HEK293 (cell line): ENCODE measurements at regions of chr5 and their contacts with region 1.

Region 1: GRCh38 chr5:136080483-136081216 is 51.9 kb downstream of the TGFBI start:
- H3K4me3 ChIP-seq: peak overlapping the region; percentile 44
- H3K27ac ChIP-seq: peak overlapping the region; percentile 43; the same call in 1 of the 2 replicates
- H3K4me1 ChIP-seq: peaks cover 3% of the 10 kb centered on the region; the same call in 1 of the 2 replicates
- CTCF ChIP-seq: no peak

Region 2: GRCh38 chr5:135887351-135887864 is 193.2 kb before region 1 on chr5:
- CTCF ChIA-PET with region 1: interaction called, 66 read pairs
- POLR2A ChIA-PET with region 1: no interaction called
- H3K4me3 ChIP-seq: no peak overlapping the region
- H3K27ac ChIP-seq: no peak overlapping the region
- H3K4me1 ChIP-seq: peaks cover 12% of the 10 kb centered on the region
- CTCF ChIP-seq: peak; percentile 88

Region 3: GRCh38 chr5:136035837-136036236 is 44.8 kb before region 1 on chr5:
- CTCF ChIA-PET with region 1: no interaction called
- POLR2A ChIA-PET with region 1: no interaction called
- H3K4me3 ChIP-seq: no peak overlapping the region
- H3K27ac ChIP-seq: no peak overlapping the region; the same call in 1 of the 2 replicates
- H3K4me1 ChIP-seq: peaks cover 18% of the 10 kb centered on the region
- CTCF ChIP-seq: no peak

Region 4: DNA sequence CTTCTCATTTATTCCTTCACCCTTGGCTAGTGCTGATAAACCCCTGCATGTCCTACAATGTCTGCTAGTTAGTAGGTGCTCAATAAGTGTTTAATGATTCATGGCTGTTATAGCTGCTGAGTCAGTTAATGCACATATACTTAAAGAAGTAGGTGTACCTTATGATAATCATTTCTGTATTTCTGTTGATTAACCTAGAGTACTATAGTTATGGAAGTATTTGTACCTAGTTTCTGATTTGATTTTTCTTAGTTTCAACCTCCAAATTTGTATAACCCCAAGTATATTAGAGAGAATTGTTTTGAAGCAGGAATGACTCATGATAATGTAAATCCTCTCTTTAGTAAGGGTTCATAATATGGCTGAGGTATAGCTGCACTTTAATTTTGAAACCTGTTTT is 60.9 kb after region 1 on chr5:
- CTCF ChIA-PET with region 1: interaction called, 15 read pairs
- POLR2A ChIA-PET with region 1: no interaction called
- H3K4me3 ChIP-seq: no peak overlapping the region
- H3K27ac ChIP-seq: no peak overlapping the region
- H3K4me1 ChIP-seq: peaks cover 50% of the 10 kb centered on the region
- CTCF ChIP-seq: no peak